ENCODE measurements at regions of chr1 and their contacts with region 1.

Region 1: DNA sequence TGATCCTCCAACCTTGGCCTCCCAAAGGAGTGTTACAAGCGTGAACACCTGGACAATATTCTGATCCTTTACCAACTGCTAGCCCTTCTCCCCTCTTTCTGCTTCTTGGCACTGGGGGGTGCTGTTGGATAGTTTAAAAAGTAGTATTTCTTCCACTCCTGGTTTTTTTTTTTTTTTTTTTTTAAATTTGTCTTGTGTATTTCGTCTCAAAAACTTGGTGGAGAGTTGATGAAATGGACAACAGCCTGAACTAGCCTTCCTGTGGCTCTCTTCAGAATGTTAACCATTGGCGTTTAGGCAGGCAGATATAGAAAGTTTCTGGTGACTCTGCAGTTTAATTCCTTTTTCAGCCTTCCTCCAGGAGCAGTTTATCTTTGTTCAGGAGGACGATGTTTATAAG is 69.7 kb upstream of the USP24 start:
- H3K4me3 Mint-ChIP-seq: no peak overlapping the region
- H3K27ac Mint-ChIP-seq: no peak overlapping the region
- H3K4me1 Mint-ChIP-seq: peaks cover 6% of the 10 kb centered on the region
- H3K27me3 Mint-ChIP-seq: peaks cover 36% of the 10 kb centered on the region

Region 2: DNA sequence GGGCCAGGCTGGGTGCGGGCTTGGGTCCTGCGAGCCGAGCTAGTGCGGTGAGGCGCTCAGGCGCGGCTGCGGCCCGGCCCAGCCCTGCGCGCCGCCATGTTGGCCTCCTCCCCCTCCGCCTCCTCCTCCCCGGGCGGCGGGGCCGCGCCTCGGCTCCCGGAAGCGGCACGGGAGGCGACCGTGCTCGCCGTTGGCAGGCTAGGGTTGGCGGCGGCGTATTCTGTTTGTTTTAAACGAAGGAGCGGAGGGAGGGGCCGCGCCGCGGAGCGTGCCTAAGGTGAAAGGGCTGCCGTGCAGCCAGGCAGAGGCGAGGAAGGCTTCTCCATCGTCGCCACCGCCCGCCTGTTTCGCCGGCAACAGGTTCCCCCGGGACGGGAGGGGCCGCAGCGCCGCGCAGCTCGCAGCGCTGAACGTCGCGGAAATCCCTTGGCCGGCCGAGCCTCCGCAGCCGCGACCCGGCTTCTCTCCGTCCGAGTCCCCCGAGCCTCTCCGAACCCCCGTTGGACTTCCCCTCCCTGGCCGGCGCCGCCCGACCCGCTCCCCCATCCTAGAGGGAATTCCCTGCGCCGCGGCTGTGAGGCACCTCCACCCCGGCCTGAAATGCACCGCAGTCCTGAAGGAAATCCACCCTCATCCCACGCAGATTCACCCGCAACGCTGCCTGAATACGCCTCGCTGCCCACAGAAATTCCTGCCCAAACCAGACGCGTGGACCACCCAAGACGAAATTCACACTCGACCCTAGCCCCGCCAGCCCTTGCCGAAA is 69.4 kb before region 1 on chr1 and contains the start of gene USP24:
- intact Hi-C with region 1: no loop called
- H3K4me3 Mint-ChIP-seq: peak within 1 kb of the TSS; percentile 91
- H3K27ac Mint-ChIP-seq: peak within 1 kb of the TSS; percentile 92
- H3K4me1 Mint-ChIP-seq: peaks cover 69% of the 10 kb centered on the region
- H3K27me3 Mint-ChIP-seq: no peaks in the 10 kb centered on the region

Region 3: DNA sequence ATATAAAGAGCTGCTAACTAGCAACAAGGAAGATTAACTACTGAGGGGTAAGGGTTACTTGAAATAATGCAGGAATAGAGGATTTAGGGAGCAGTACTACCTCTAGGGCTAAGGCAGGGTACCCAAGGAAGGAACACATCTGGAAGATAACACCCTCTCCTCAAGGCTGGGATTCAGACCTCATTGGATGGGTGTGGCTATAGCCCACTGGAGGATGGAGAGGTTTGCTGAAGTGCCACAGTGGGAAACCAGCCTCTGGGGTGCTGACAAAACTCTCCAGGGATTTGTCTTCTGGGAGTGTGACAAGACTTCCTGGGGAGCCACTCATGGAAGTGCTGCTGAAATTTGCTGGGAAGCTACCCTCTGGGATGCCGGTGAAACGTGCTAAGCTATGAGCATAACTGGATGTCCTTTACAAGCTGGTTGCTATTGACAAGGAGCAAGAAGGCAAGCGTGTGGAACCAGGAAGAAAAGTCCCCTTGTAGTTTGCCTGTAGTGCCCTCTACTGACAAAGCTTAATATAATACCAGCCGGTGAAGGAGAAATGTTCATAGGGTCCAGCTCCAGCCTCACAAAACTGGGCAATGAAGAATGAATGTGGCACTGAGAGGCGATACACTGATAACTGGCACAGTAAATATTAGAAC is 53.1 kb after region 1 on chr1:
- intact Hi-C with region 1: loop called (anchors 2 kb)
- H3K4me3 Mint-ChIP-seq: no peak overlapping the region
- H3K27ac Mint-ChIP-seq: no peak overlapping the region
- H3K4me1 Mint-ChIP-seq: peaks cover 8% of the 10 kb centered on the region
- H3K27me3 Mint-ChIP-seq: peaks cover 34% of the 10 kb centered on the region

Region 4: DNA sequence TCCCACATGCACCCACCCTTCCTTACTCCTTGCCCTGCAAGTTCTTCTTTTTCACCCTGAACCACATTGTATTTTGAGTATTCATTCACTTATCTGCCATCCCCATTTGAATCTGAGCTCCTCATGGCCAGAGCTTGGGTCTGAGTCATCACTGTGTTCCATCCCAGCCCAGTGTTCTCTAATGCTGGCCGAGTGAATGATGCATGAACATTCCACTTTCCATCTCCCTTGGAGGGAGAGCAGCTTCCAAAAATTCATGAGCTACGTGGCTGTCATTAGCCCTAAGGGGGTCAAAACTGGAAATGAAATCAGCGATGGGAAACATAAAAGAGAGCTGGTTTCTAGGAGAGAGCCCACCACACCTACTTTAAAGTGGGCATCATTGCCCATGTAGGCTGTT is 117.3 kb after region 1 on chr1:
- intact Hi-C with region 1: no loop called
- H3K4me3 Mint-ChIP-seq: no peak overlapping the region
- H3K27ac Mint-ChIP-seq: no peak overlapping the region
- H3K4me1 Mint-ChIP-seq: no peaks in the 10 kb centered on the region
- H3K27me3 Mint-ChIP-seq: peaks cover 8% of the 10 kb centered on the region

Region 5: DNA sequence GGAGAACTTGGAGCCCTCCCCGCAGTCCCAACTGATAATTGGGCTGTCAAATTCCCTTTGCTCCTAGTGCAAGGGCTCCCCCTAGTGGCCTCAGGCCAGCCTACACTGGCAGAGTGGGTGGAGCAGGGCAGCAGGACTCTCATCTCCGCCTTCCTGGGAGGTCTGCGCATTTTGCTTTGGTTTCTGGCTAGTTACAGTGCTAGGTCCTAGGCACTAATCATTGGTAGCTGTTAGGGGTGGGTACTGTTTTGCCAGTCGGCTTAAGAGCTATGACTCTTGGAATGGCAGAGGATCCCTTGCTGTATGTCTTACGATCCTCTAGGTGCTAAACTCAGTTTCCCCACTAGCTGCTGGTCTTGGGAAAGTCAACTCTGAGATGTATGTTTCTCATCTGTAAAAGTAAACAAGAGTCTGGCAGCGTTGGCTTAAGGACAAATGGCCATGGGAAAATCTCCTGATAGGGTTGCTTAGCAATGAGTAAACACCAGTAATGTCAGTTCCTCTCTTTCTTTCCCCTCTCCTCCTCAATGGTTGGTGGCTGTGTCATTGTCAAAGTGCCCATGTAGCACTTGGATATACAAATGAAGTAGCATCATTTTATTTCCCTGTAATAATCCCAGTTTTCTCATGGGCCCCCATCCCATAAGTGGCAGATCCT is 1536.4 kb after region 1 on chr1:
- intact Hi-C with region 1: loop called (anchors 2 kb)
- H3K4me3 Mint-ChIP-seq: no peak overlapping the region
- H3K27ac Mint-ChIP-seq: no peak overlapping the region
- H3K4me1 Mint-ChIP-seq: peaks cover 6% of the 10 kb centered on the region
- H3K27me3 Mint-ChIP-seq: peaks cover 5% of the 10 kb centered on the region

Measured in dendritic cell treated with granulocyte-macrophage colony-stimulating factor and Interleukin-4, amounts not matched to agents 40 ng/mL and 50 ng/mL, for 4 days (primary cell).